Activated T-helper 1 cell treated with anti-CD3 and anti-CD28 coated beads, Interleukin-12 subunit alpha, Interleukin-12 subunit beta, Interleukin-2, Interleukin-4 antibody, amounts not matched to agents 30 ng/mL and 10 ng/mL and 1 ng/mL, durations not matched to agents 14 hours and 24 hours and 36 hours (primary cell): ENCODE measurements at regions of chr19 and their contacts with region 1.

Region 1: GRCh38 chr19:52942386-52943133 is 19.3 kb upstream of the ZNF888 start:
- DNase-seq: peak; percentile 94
- H3K4me3 Mint-ChIP-seq: peak overlapping the region; percentile 89
- H3K27ac Mint-ChIP-seq: peak overlapping the region; percentile 88
- H3K4me1 Mint-ChIP-seq: peaks cover 27% of the 10 kb centered on the region
- H3K27me3 Mint-ChIP-seq: peaks cover 2% of the 10 kb centered on the region

Region 2: GRCh38 chr19:52853880-52854279 is 88.7 kb before region 1 on chr19:
- intact Hi-C with region 1: loop called (anchors 1 kb)
- DNase-seq: no peak
- H3K4me3 Mint-ChIP-seq: no peak overlapping the region
- H3K27ac Mint-ChIP-seq: no peak overlapping the region
- H3K4me1 Mint-ChIP-seq: peaks cover 22% of the 10 kb centered on the region
- H3K27me3 Mint-ChIP-seq: no peaks in the 10 kb centered on the region

Region 3: GRCh38 chr19:52880895-52881389 is 61.6 kb before region 1 on chr19:
- intact Hi-C with region 1: no loop called
- DNase-seq: no peak
- H3K4me3 Mint-ChIP-seq: no peak overlapping the region
- H3K27ac Mint-ChIP-seq: no peak overlapping the region
- H3K4me1 Mint-ChIP-seq: no peaks in the 10 kb centered on the region
- H3K27me3 Mint-ChIP-seq: no peaks in the 10 kb centered on the region

Region 4: GRCh38 chr19:52922841-52923777 is 19.5 kb before region 1 on chr19 and contains the start of gene ZNF888:
- intact Hi-C with region 1: loop called (anchors 2 kb)
- DNase-seq: peak; percentile 77
- H3K4me3 Mint-ChIP-seq: peak within 1 kb of the TSS; percentile 93
- H3K27ac Mint-ChIP-seq: peak within 1 kb of the TSS; percentile 96
- H3K4me1 Mint-ChIP-seq: peaks cover 31% of the 10 kb centered on the region
- H3K27me3 Mint-ChIP-seq: no peaks in the 10 kb centered on the region
- total RNA-seq, gene ZNF888: 4.2 and 4.6 TPM in 2 replicates

Region 5: DNA sequence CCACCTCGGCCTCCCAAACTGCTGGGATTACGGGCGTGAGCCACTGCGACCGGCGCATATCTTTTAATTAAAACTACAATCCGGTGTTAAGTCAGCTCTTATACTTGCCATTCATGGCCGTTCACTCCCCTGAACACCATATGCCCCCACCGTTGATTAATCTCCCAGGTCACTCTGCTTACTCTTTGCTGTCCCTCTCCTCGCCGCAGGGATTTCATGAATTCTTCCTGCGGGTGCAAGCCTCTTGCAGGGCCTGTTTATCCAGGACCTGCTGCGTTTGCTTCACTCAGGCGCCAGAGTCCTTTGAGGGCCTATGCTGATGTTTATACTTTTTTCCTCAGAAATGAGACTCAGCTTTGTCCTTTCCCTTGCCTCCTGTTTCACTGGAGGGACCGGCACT is 103.0 kb after region 1 on chr19:
- intact Hi-C with region 1: no loop called
- DNase-seq: no peak
- H3K4me3 Mint-ChIP-seq: no peak overlapping the region
- H3K27ac Mint-ChIP-seq: no peak overlapping the region
- H3K4me1 Mint-ChIP-seq: no peaks in the 10 kb centered on the region
- H3K27me3 Mint-ChIP-seq: no peaks in the 10 kb centered on the region

Region 6: GRCh38 chr19:53158119-53158656 is 215.6 kb after region 1 on chr19:
- intact Hi-C with region 1: loop called (anchors 1 kb)
- DNase-seq: peak; percentile 16
- H3K4me3 Mint-ChIP-seq: peak overlapping the region; percentile 85
- H3K27ac Mint-ChIP-seq: peak overlapping the region; percentile 71
- H3K4me1 Mint-ChIP-seq: peaks cover 15% of the 10 kb centered on the region
- H3K27me3 Mint-ChIP-seq: no peaks in the 10 kb centered on the region